ENCODE measurements at regions of chr4 and their contacts with region 1.

Region 1: DNA sequence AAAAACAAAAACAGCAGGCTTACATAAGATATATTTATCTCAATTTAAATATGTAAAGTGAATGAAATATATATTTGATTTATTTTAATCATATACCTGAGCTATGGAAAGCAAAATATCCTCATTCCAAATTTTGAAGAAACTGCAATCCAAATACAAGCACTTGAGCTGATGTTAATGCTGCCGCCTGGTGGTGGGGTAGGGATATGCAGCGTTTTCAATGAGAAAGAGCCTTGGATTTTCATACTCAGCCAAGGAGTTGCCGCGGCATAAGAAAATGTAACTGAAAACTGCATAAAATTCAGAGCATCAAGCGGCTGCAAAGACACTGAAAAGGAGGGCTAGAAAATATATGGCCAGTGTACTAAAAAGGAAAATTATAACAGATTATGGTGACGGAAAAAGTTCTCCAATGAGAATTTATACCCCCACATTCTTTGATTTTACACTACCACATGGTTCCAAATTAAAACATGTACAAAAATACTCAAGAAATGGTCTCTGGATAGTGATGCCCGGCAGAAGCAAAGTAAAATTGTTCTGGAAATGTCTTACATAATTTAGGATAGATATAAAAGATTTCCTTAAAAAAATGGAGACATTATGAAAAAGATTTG is 660.3 kb upstream of the PITX2 start:
- DNase-seq: no peak
- ATAC-seq: no peak

Region 2: DNA sequence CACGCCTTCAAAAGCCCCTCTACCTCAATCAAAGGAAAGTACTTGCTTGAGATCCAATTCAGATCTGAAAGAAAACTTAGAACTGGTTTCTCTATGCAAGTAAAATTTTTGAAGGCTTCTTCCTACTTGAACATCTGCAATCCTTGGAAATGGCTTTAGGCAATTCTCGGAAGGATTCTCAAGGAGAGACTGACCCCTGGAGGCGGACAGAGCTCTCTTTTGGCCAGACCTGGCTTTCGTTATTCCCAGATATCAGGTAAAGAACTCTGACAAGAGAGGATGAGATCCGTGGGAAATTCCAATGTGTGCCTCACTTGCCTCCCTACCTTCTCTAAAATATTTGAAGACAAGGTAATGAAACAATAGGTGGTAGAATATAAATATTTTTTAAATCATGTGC is 191.8 kb after region 1 on chr4:
- intact Hi-C with region 1: loop called (anchors 10 kb)
- DNase-seq: no peak
- ATAC-seq: no peak

Region 3: GRCh38 chr4:111562826-111563225 is 279.7 kb after region 1 on chr4:
- intact Hi-C with region 1: no loop called
- DNase-seq: no peak
- ATAC-seq: no peak

Measured in Right ventricle myocardium inferior (tissue), 1 donor.